Mammary epithelial cell (primary cell): ENCODE measurements at regions of chr6 and their contacts with region 1.

Region 1: DNA sequence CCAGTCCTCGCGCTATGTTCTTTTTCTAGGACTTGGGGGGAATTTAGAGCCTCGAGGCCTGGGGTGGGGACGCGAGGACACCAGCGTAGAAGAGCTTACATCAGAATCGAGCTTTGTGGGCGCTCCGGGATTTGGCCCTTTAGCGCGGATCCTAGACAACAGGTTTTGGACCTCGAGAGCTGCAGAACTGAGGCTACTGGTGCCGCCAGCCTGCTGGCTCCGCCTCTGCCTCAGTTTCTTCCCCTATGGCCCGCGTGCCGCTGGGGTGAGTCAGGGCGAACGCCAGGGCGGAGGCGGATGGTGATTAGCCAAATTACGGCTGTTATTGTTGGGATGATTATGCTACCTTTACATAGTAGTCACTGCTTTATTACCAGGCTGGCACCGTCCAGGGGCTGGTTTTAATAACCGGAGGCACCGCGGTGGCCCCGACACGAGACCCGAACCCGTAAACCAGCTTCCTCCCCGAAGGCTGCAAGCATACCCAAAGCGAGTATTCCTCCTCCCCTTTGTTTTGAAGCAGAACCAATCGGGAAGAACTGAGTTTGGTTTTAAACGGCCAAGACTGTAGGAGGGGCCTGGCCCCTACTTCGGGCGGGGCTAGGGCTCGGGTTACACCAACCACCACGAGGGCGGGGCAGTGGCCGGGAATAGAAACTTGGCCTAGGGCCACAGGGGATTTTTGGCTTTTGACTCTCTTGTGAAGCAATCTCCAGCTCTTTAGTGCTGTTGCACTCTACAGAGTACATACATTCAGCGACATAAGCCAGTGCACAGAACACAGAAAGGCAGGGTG is 639 bp upstream of the GTPBP2 start:
- DNase-seq: peak; percentile 98
- H3K4me3 ChIP-seq: peak overlapping the region; percentile 78 to 85 (median 83)
- H3K27ac ChIP-seq: peak overlapping the region; percentile 92
- H3K4me1 ChIP-seq: peaks cover 22% of the 10 kb centered on the region
- H3K27me3 ChIP-seq: no peaks in the 10 kb centered on the region
- CTCF ChIP-seq: no peak

Region 2: DNA sequence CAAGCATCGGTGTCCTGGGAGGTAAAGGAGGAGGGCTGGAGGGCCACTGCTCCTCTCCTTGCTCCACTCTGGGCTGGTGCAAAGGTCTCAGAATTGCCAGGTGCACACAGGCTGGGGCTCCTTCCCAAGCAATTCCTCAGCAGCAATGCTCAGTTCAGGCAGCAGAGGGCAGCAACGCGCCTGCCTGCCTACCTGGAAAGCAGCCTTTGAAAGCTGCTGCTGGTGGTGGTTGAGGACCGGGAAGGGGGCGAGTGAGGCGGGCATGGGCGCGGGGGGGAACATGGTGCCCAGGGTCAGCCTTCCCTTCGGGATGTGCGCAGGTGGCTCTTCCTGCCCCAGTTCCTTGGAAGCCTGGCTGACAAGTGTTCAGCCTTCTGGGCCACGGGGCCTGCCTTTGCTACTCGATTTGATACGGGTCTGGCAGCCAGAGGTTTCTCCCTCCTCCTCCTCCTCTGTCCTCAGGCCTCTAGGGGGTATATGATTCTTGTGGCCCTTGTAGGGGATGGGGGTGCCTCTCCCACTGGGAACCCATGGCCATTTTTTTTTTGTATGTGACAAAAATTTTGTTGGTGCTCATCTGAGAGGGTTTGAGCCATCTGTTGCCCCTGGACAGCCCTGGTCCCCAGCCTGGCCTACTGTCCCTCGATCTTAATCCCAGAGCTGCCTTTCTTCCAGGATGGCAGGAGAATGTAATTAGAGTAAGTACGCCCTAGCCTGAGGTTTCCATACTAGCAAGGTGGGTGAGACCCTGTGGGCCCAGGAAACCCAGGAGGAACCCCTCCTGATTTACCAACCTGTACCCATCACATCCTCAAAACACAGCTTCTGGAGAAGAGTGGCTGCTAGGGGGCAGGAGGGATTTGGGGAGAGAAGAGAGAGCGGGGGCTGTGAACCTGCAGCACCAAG is 37.8 kb after region 1 on chr6:
- CTCF ChIA-PET with region 1: interaction called, 4 read pairs
- dilution Hi-C with region 1: no loop called
- in situ Hi-C with region 1: no loop called
- intact Hi-C with region 1: loop called (anchors 1 kb)
- DNase-seq: peak; percentile 69
- H3K4me3 ChIP-seq: no peak overlapping the region
- H3K27ac ChIP-seq: peak overlapping the region; percentile 2
- H3K4me1 ChIP-seq: peaks cover 47% of the 10 kb centered on the region
- H3K27me3 ChIP-seq: no peaks in the 10 kb centered on the region
- CTCF ChIP-seq: peak; percentile 96 to 98

Region 3: GRCh38 chr6:43786664-43787329 is 157.1 kb after region 1 on chr6:
- CTCF ChIA-PET with region 1: interaction called, 23 read pairs
- dilution Hi-C with region 1: no loop called
- in situ Hi-C with region 1: no loop called
- intact Hi-C with region 1: no loop called
- DNase-seq: no peak
- H3K4me3 ChIP-seq: no peak overlapping the region
- H3K27ac ChIP-seq: no peak overlapping the region
- H3K4me1 ChIP-seq: no peaks in the 10 kb centered on the region
- H3K27me3 ChIP-seq: no peaks in the 10 kb centered on the region
- CTCF ChIP-seq: no peak